Ovary (tissue), 10 donors: ENCODE measurements at regions of chr18 and their contacts with region 1.

Region 1: DNA sequence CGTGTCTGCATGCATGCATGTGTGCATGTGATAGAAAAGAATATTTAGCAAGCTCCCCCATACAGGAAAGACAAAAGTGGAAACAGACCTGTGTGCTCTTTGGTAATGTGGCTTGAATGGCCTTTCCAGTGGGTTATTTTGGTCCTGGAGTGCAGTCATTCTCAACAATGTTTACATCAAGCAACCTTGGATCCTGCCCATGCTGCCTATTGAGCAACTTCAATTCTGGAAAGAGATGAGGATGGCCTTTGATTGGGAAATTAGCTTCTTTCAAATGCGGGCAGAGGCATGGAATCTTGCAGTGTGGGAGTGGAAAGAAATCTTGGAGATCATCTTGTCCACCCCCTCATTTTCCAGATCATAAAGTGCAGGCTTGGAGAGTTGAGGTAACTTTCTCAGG is 87.2 kb upstream of the SMAD2 start:
- DNase-seq: no peak
- H3K4me3 ChIP-seq: no peak overlapping the region
- H3K27ac ChIP-seq: no peak overlapping the region
- H3K4me1 ChIP-seq: peaks cover 2% of the 10 kb centered on the region
- H3K27me3 ChIP-seq: no peaks in the 10 kb centered on the region
- CTCF ChIP-seq: no peak
- EP300 ChIP-seq: no peak
- POLR2A ChIP-seq: no peak

Region 2: DNA sequence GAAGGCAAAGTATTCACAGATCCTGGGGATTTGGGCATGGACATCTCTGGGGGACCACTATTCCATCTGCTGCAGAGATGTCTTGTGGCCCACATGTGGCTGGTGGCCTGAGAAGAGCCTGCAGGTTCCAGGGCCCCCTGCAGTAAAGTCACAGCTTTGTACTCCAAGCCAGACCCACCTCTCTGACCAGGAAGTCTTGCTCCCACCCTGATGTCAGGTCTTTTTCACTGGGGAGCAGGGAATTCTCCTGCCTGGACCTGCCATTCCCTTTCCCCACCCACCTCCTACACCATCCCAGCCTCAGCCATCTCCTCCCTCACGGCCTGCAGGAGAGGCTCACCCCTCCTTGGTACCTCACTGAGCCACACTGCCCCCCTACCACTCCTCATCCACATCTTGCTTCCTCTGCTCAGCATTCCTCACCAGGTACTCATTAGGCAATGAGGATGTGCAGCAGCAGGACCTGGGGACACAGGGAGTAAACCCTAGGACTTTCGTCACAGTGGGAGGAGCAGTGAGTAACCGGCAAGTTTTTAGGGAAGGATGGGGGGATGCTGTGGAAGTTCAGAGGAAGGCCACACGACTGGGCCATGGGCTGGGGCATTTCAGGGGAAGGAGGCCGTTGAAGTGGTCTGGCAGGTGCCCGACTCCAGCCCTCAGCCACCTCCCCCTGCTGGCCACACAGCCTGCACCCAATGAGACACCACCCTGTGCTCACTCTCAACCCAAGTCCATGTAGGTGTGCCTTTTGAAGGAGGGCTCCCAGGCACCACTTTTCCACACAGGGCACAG is 298.8 kb before region 1 on chr18:
- intact Hi-C with region 1: no loop called
- DNase-seq: no peak
- H3K4me3 ChIP-seq: no peak overlapping the region
- H3K27ac ChIP-seq: no peak overlapping the region
- H3K4me1 ChIP-seq: no peaks in the 10 kb centered on the region
- H3K27me3 ChIP-seq: no peaks in the 10 kb centered on the region
- CTCF ChIP-seq: no peak
- EP300 ChIP-seq: no peak
- POLR2A ChIP-seq: no peak

Region 3: GRCh38 chr18:47772374-47773248 is 245.0 kb before region 1 on chr18:
- intact Hi-C with region 1: loop called in 1 of 4 experiments (anchors 5 kb)
- DNase-seq: peak in 2 of 5 donors; percentile 28 to 55
- H3K4me3 ChIP-seq: no peak overlapping the region
- H3K27ac ChIP-seq: no peak overlapping the region
- H3K4me1 ChIP-seq: no peaks in the 10 kb centered on the region
- H3K27me3 ChIP-seq: no peaks in the 10 kb centered on the region
- CTCF ChIP-seq: no peak
- EP300 ChIP-seq: no peak
- POLR2A ChIP-seq: no peak

Region 4: DNA sequence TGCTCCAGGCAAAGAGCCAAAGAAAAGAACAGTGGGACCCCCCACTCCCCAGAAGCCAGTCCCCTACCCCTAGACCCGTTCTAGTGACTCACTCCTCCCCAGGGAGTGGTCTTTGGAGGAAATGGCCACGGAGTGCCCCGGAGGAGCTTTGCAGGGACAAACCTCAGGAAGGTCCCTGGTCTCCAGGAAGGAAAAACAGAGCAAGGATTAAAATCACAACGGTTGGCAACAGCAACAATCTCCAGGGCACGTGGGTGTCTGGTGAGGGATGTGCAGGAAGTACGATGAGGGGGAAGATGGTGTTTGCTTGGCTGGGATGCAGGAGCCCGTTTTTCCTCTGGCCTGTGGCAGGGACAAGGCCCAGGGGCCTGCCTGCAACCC is 222.2 kb before region 1 on chr18:
- intact Hi-C with region 1: loop called in 1 of 4 experiments (anchors 10 kb)
- DNase-seq: peak in 3 of 5 donors; percentile 18 to 46 (median 36)
- H3K4me3 ChIP-seq: no peak overlapping the region
- H3K27ac ChIP-seq: peak overlapping the region in 1 of 2 donors; percentile 49
- H3K4me1 ChIP-seq: peaks cover 12% of the 10 kb centered on the region
- H3K27me3 ChIP-seq: no peaks in the 10 kb centered on the region
- CTCF ChIP-seq: no peak
- EP300 ChIP-seq: no peak
- POLR2A ChIP-seq: no peak